ENCODE measurements at regions of chr18 and their contacts with region 1.

Region 1: DNA sequence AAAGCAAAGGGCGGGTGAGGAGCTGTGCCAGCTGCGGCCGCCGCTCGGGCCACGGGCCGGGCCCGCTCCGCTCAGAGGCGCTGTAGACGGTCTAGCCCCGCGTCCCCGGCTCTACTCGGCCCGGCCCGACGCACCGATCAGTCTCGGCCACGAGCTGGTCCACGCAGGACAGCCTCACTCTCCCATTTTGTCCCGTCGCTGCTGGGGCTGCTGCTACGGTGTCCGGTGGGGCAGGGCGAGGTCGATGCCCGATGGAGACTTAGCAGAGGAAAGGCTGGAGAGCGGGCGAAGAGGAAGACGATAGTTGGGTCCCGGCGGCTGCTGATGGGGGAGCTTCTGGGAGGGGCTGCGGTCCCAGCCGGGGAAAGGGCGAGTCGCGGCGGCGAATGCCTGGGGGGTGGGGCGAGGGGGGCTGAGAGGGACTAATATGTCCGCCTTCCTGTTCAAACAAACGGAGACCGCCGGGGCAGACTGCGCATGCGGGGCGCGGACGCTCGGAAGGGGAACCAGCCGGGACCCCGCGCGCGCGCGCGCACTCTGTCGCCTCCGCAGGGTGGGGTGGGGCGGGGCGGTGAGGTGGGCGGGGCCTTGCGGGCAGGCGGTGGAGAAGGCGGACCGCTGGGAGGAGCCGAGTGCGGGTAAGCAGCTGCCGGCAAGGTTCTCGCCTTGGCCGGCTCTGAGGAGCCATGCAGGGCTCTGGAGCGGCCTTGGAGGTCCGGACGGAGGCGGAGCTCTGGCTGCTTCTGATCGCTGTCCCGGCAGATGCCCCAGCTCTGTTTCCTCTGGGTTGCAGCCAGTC is at the start of gene ROCK1:
- DNase-seq: peak; percentile 96 to 98
- ATAC-seq: peak; percentile 82 to 96 (median 85)
- H3K4me3 ChIP-seq: peak within 1 kb of the TSS; percentile 92
- H3K4me3 Mint-ChIP-seq: no peak within 1 kb of the TSS
- H3K27ac ChIP-seq: peak within 1 kb of the TSS; percentile 95
- H3K27ac Mint-ChIP-seq: peak within 1 kb of the TSS; percentile 93
- H3K4me1 ChIP-seq: peaks cover 7% of the 10 kb centered on the region
- H3K4me1 Mint-ChIP-seq: peaks cover 11 to 16% of the 10 kb centered on the region in 2 donors
- H3K27me3 ChIP-seq: no peaks in the 10 kb centered on the region
- H3K27me3 Mint-ChIP-seq: no peaks in the 10 kb centered on the region
- CTCF ChIP-seq: no peak
- total RNA-seq, gene ROCK1: 139 to 152 (median 149) TPM

Region 2: DNA sequence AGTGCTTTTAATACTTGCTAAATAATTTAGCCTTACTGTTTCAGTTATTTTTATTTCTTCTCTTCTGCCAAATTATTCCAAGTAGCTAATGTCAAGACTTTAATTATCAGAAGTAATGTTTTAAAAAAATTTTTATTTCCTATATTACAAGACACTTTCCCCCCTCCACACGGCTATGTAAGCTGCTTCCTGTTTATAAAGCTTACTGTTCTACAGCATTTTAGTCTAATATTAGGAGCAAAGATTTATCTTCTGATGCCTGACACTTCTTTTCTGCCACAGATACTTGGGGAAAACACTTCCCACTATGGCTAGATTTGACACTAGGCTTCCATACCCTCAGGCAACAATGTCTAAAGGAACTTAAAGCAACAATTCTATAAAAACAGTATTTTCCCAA is 62.2 kb before region 1 on chr18:
- intact Hi-C with region 1: loop called (anchors 5 kb)
- DNase-seq: peak in 1 of 2 donors; percentile 10
- ATAC-seq: no peak
- H3K4me3 ChIP-seq: no peak overlapping the region
- H3K4me3 Mint-ChIP-seq: no peak overlapping the region
- H3K27ac ChIP-seq: no peak overlapping the region
- H3K27ac Mint-ChIP-seq: peak overlapping the region; percentile 29 to 77
- H3K4me1 ChIP-seq: peaks cover 11% of the 10 kb centered on the region
- H3K4me1 Mint-ChIP-seq: peaks cover 54% of the 10 kb centered on the region in 2 donors
- H3K27me3 ChIP-seq: no peaks in the 10 kb centered on the region
- H3K27me3 Mint-ChIP-seq: no peaks in the 10 kb centered on the region
- CTCF ChIP-seq: no peak

Region 3: GRCh38 chr18:21134898-21135297 is 23.4 kb after region 1 on chr18:
- intact Hi-C with region 1: no loop called
- DNase-seq: peak in 1 of 2 donors; percentile 69
- ATAC-seq: peak in 1 of 3 donors; percentile 59
- H3K4me3 ChIP-seq: no peak overlapping the region
- H3K4me3 Mint-ChIP-seq: no peak overlapping the region
- H3K27ac ChIP-seq: no peak overlapping the region
- H3K27ac Mint-ChIP-seq: no peak overlapping the region
- H3K4me1 ChIP-seq: no peaks in the 10 kb centered on the region
- H3K4me1 Mint-ChIP-seq: no peaks in the 10 kb centered on the region
- H3K27me3 ChIP-seq: no peaks in the 10 kb centered on the region
- H3K27me3 Mint-ChIP-seq: peaks cover under 1 to 7% of the 10 kb centered on the region in 2 donors
- CTCF ChIP-seq: peak; percentile 31

Region 4: DNA sequence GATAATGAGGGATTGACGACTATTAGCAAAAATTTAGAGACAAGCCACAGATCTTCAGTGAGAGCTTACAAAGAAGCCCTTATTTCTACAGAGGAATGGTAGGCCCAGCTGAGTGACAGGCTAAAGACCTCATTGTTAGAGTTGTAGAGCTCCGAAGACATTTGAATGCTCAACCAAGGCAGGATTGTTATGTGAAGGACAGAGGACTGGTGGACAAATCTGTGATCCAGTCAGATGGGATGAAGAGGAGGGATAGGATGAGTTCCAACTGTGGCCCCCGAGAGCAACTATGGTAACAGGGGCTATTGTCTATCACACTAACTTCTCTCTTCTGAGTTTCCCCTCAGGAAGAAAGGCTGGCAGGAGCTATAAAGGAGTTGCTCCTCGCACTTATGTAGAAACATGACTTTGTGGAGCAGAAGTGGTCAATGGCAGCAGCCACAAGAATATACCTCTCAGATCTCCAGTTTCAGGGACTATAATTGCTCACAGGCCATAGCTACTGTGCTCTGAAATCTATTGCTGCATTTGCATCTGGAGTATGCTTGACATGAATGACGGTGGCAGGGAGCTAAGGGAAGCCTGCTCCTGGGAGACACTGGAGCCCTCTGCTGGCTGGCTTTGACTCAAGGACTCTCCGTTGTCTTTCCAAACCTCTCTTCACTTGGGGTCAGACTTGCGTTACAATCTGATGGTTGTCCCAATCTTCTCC is 80.2 kb after region 1 on chr18:
- intact Hi-C with region 1: no loop called
- DNase-seq: peak in 1 of 2 donors; percentile 19
- ATAC-seq: no peak
- H3K4me3 ChIP-seq: no peak overlapping the region
- H3K4me3 Mint-ChIP-seq: no peak overlapping the region
- H3K27ac ChIP-seq: no peak overlapping the region
- H3K27ac Mint-ChIP-seq: no peak overlapping the region
- H3K4me1 ChIP-seq: no peaks in the 10 kb centered on the region
- H3K4me1 Mint-ChIP-seq: no peaks in the 10 kb centered on the region
- H3K27me3 ChIP-seq: no peaks in the 10 kb centered on the region
- H3K27me3 Mint-ChIP-seq: peaks cover 7 to 24% of the 10 kb centered on the region in 2 donors
- CTCF ChIP-seq: no peak

Region 5: DNA sequence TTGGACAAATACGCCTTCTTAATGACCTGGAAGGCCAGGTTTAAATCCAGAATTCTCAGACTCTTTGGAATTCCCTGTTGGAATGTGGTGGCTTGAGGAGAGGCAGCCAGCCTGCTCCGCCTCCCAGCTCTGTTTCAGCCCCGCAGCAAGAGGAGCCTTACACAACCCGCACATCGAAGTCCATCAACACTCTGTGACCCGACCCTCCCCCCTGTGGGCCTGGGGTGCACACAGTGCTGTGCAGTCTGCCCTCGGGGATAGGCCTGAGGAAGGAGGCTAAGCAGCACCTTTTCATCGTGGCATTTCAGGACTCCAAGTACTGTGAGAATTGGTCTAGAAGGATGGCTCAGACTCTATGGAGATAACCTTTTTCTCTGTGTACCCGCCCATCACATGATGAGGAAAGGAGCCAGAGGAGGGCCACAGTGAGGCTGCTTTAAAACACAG is 204.2 kb after region 1 on chr18:
- intact Hi-C with region 1: no loop called
- DNase-seq: no peak
- ATAC-seq: no peak
- H3K4me3 ChIP-seq: no peak overlapping the region
- H3K4me3 Mint-ChIP-seq: no peak overlapping the region
- H3K27ac ChIP-seq: no peak overlapping the region
- H3K27ac Mint-ChIP-seq: no peak overlapping the region
- H3K4me1 ChIP-seq: no peaks in the 10 kb centered on the region
- H3K4me1 Mint-ChIP-seq: no peaks in the 10 kb centered on the region
- H3K27me3 ChIP-seq: no peaks in the 10 kb centered on the region
- H3K27me3 Mint-ChIP-seq: peaks cover 0 to 3% of the 10 kb centered on the region in 2 donors
- CTCF ChIP-seq: no peak

Measured in natural killer cell (primary cell).